HCT116 (cell line): ENCODE measurements at regions of chr10 and their contacts with region 1.

Region 1: DNA sequence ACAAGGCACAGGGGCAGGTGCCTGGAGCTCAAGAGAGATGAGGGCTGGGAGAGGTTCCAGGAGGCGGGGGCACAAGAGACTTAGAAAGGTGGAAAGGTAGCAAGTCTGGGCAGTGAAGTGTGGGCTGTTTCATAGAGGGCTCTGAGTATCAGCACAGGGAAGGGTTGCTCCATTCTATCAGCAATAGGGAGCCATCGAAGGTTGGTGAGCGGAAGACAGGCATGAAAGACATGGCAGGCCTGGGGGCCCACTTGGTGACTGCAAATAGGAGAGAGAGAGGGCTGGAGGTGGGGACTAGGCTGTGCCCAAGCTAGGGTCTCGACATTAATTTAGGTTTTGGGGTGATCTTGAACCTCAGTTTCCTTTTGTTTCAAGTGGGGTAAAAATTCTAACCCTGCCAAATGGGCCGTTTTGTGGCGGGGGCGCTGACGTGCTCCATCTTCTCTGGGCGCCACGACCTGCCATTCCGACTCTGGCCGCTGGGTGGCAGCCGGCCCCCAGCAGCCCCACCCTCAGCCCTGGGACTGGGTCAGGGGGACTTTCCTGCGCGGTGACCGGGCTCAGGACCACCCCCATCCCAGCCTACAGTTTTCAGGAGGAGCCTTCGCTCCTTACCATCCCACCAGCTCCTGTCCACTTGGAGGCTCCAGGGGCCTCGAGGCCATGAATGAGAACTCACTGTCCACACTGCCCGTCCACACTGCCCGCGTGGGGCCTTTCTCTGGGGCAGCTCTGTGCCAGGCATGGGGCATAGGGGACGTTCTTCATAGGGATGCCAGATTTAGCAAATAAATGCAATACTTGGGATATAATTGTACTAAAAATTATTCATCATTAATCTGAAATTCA is 37.2 kb upstream of the PCBD1 start:
- DNase-seq: no peak
- ATAC-seq: peak; percentile 83
- H3K4me3 ChIP-seq: no peak overlapping the region
- H3K27ac ChIP-seq: no peak overlapping the region
- H3K4me1 ChIP-seq: peaks cover 31 to 35% of the 10 kb centered on the region in 2 experiments
- H3K27me3 ChIP-seq: no peaks in the 10 kb centered on the region
- CTCF ChIP-seq: peak; percentile 89 to 95 (median 91)
- POLR2A ChIP-seq: no peak
- RAD21 ChIP-seq: peak; percentile 92

Region 2: GRCh38 chr10:71270301-71271220 is 345.0 kb after region 1 on chr10:
- CTCF ChIA-PET with region 1: interaction called, 3 read pairs
- POLR2A ChIA-PET with region 1: no interaction called
- RAD21 ChIA-PET with region 1: no interaction called
- intact Hi-C with region 1: loop called (anchors 5 kb)
- DNase-seq: peak; percentile 68
- ATAC-seq: peak; percentile 91
- H3K4me3 ChIP-seq: no peak overlapping the region
- H3K27ac ChIP-seq: no peak overlapping the region
- H3K4me1 ChIP-seq: peaks cover 24 to 34% of the 10 kb centered on the region in 2 experiments; a peak in 3 of 4 replicates
- H3K27me3 ChIP-seq: no peaks in the 10 kb centered on the region
- CTCF ChIP-seq: peak; percentile 32 to 85 (median 65); a peak in 5 of 6 replicates
- POLR2A ChIP-seq: no peak
- RAD21 ChIP-seq: peak; percentile 57

Region 3: GRCh38 chr10:71285180-71285545 is 359.6 kb after region 1 on chr10:
- CTCF ChIA-PET with region 1: interaction called, 7 read pairs
- POLR2A ChIA-PET with region 1: no interaction called
- RAD21 ChIA-PET with region 1: no interaction called
- intact Hi-C with region 1: loop called (anchors 2 kb)
- DNase-seq: no peak
- ATAC-seq: peak; percentile 90
- H3K4me3 ChIP-seq: no peak overlapping the region
- H3K27ac ChIP-seq: no peak overlapping the region
- H3K4me1 ChIP-seq: no peaks in the 10 kb centered on the region
- H3K27me3 ChIP-seq: no peaks in the 10 kb centered on the region
- CTCF ChIP-seq: peak; percentile 69 to 81 (median 73)
- POLR2A ChIP-seq: no peak
- RAD21 ChIP-seq: peak; percentile 87